Natural killer cell (primary cell): ENCODE measurements at regions of chr16 and their contacts with region 1.

Region 1: GRCh38 chr16:87765776-87766484 is at the start of gene KLHDC4:
- DNase-seq: peak; percentile 91 to 94
- ATAC-seq: peak; percentile 41 to 60 (median 41)
- H3K4me3 ChIP-seq: peak within 1 kb of the TSS; percentile 87
- H3K4me3 Mint-ChIP-seq: peak within 1 kb of the TSS; percentile 100
- H3K27ac ChIP-seq: peak within 1 kb of the TSS; percentile 96
- H3K27ac Mint-ChIP-seq: peak within 1 kb of the TSS; percentile 95 to 100
- H3K4me1 ChIP-seq: peaks cover 51% of the 10 kb centered on the region
- H3K4me1 Mint-ChIP-seq: peaks cover 53 to 58% of the 10 kb centered on the region in 2 donors
- H3K27me3 ChIP-seq: no peaks in the 10 kb centered on the region
- H3K27me3 Mint-ChIP-seq: no peaks in the 10 kb centered on the region
- CTCF ChIP-seq: no peak
- total RNA-seq, gene KLHDC4: 210 to 311 (median 210) TPM

Region 2: GRCh38 chr16:87492721-87493607 is 273.0 kb before region 1 on chr16 and contains the start of gene ZCCHC14:
- intact Hi-C with region 1: loop called (anchors 10 kb)
- DNase-seq: peak; percentile 99
- ATAC-seq: peak; percentile 92 to 99 (median 94)
- H3K4me3 ChIP-seq: peak within 1 kb of the TSS; percentile 65
- H3K4me3 Mint-ChIP-seq: peak within 1 kb of the TSS; percentile 90
- H3K27ac ChIP-seq: no peak within 1 kb of the TSS
- H3K27ac Mint-ChIP-seq: peak within 1 kb of the TSS; percentile 82 to 87
- H3K4me1 ChIP-seq: peaks cover 62% of the 10 kb centered on the region
- H3K4me1 Mint-ChIP-seq: peaks cover 45 to 73% of the 10 kb centered on the region in 2 donors
- H3K27me3 ChIP-seq: no peaks in the 10 kb centered on the region
- H3K27me3 Mint-ChIP-seq: no peaks in the 10 kb centered on the region
- CTCF ChIP-seq: no peak
- total RNA-seq, gene ZCCHC14: 12.2 to 20.9 (median 19.2) TPM

Region 3: DNA sequence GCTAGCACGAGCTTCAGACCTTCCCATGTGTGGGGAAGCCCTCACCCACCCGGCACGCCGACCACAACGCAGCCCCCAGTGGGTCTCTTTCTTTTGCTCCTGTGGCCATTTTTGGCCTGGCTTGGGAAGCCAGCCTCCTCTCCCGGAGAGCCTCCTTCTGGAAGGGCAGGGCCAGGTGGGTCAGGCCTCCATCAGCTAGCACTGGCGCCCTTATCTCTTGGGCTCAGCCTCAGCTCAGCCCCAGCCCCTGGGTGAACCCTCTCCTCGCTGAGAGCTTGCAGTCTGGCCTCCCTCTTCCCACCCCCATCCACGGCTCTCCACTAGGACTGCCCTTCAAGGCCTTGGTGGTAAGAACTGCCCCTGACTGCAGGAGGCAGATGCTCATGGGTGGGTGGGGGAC is 178.3 kb before region 1 on chr16:
- intact Hi-C with region 1: loop called (anchors 1 kb)
- DNase-seq: no peak
- ATAC-seq: no peak
- H3K4me3 ChIP-seq: no peak overlapping the region
- H3K4me3 Mint-ChIP-seq: no peak overlapping the region
- H3K27ac ChIP-seq: no peak overlapping the region
- H3K27ac Mint-ChIP-seq: no peak overlapping the region
- H3K4me1 ChIP-seq: no peaks in the 10 kb centered on the region
- H3K4me1 Mint-ChIP-seq: no peaks in the 10 kb centered on the region
- H3K27me3 ChIP-seq: peaks cover 2% of the 10 kb centered on the region
- H3K27me3 Mint-ChIP-seq: peaks cover 27 to 49% of the 10 kb centered on the region in 2 donors
- CTCF ChIP-seq: no peak

Region 4: DNA sequence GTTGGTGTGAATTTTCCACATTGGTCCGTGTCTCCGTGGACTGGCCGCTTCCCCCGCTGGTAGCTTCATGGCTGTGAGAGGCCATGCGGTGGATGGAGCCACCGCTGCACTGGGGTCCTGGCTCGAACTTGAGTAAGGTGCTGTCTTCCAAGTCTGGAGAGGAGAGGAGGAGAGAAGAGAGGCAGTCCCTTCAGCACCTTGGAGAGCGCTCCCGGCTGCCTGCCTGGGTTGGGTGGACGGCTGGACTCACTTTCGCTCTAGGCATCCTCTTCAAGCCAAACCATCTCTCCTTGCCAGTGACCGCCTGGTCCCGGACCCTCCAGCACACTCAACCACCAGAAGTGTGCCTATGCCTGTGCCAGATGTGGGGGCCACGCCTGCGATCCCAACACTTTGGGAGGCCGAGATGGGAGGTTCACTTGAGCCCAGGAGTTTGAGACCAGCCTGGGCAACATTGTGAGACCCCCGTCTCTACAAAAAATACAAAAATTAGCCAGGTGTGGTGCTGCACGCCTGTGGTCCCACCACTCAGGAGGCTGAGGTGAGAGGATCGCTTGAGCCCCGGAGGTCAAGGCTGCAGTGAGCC is 157.4 kb before region 1 on chr16:
- intact Hi-C with region 1: no loop called
- DNase-seq: peak; percentile 44 to 55
- ATAC-seq: peak; percentile 40 to 63 (median 48)
- H3K4me3 ChIP-seq: no peak overlapping the region
- H3K4me3 Mint-ChIP-seq: no peak overlapping the region
- H3K27ac ChIP-seq: no peak overlapping the region
- H3K27ac Mint-ChIP-seq: no peak overlapping the region
- H3K4me1 ChIP-seq: no peaks in the 10 kb centered on the region
- H3K4me1 Mint-ChIP-seq: no peaks in the 10 kb centered on the region
- H3K27me3 ChIP-seq: peaks cover 17% of the 10 kb centered on the region
- H3K27me3 Mint-ChIP-seq: peaks cover 26 to 39% of the 10 kb centered on the region in 2 donors
- CTCF ChIP-seq: no peak

Region 5: DNA sequence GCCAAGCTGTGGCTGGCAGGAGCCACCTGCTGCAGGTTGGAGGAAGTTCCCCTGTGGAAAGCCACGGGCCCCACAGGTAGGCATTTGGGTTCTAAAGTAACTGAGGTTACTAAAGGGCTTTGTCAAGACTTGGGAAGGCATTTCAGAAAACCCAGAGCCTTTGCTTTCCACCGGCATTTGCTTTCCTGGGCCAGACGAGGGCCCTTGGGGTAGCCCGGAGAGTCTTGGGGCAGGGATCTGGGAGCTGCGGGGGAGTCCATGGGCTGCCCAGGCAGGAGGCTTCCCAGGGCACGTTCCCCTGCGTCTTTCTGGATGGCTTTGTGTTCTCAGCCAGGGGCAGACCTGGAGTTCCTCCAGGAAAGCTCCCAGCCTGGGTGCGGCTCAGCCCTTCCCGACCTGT is 120.1 kb before region 1 on chr16:
- intact Hi-C with region 1: no loop called
- DNase-seq: no peak
- ATAC-seq: no peak
- H3K4me3 ChIP-seq: no peak overlapping the region
- H3K4me3 Mint-ChIP-seq: no peak overlapping the region
- H3K27ac ChIP-seq: no peak overlapping the region
- H3K27ac Mint-ChIP-seq: no peak overlapping the region
- H3K4me1 ChIP-seq: no peaks in the 10 kb centered on the region
- H3K4me1 Mint-ChIP-seq: peaks cover 0 to 10% of the 10 kb centered on the region in 2 donors
- H3K27me3 ChIP-seq: no peaks in the 10 kb centered on the region
- H3K27me3 Mint-ChIP-seq: peaks cover 8 to 12% of the 10 kb centered on the region in 2 donors
- CTCF ChIP-seq: no peak

Region 6: GRCh38 chr16:87702325-87702811 is 63.6 kb before region 1 on chr16:
- intact Hi-C with region 1: loop called (anchors 2 kb)
- DNase-seq: peak; percentile 40 to 57
- ATAC-seq: peak; percentile 78 to 82 (median 79)
- H3K4me3 ChIP-seq: no peak overlapping the region
- H3K4me3 Mint-ChIP-seq: peak overlapping the region; percentile 80
- H3K27ac ChIP-seq: peak overlapping the region; percentile 48
- H3K27ac Mint-ChIP-seq: peak overlapping the region; percentile 78 to 88
- H3K4me1 ChIP-seq: peaks cover 53% of the 10 kb centered on the region
- H3K4me1 Mint-ChIP-seq: peaks cover 42 to 47% of the 10 kb centered on the region in 2 donors
- H3K27me3 ChIP-seq: no peaks in the 10 kb centered on the region
- H3K27me3 Mint-ChIP-seq: no peaks in the 10 kb centered on the region
- CTCF ChIP-seq: peak; percentile 41

Region 7: GRCh38 chr16:87725596-87726235 is 40.2 kb before region 1 on chr16:
- intact Hi-C with region 1: loop called (anchors 1 kb)
- DNase-seq: peak; percentile 24 to 25
- ATAC-seq: peak; percentile 10 to 30 (median 21)
- H3K4me3 ChIP-seq: no peak overlapping the region
- H3K4me3 Mint-ChIP-seq: peak overlapping the region; percentile 77
- H3K27ac ChIP-seq: peak overlapping the region; percentile 97
- H3K27ac Mint-ChIP-seq: peak overlapping the region; percentile 97 to 99
- H3K4me1 ChIP-seq: peaks cover 46% of the 10 kb centered on the region
- H3K4me1 Mint-ChIP-seq: peaks cover 57 to 58% of the 10 kb centered on the region in 2 donors
- H3K27me3 ChIP-seq: no peaks in the 10 kb centered on the region
- H3K27me3 Mint-ChIP-seq: no peaks in the 10 kb centered on the region
- CTCF ChIP-seq: no peak

Region 8: GRCh38 chr16:87950765-87951549 is 185.0 kb after region 1 on chr16 and contains the start of gene BANP:
- intact Hi-C with region 1: loop called (anchors 5 kb)
- DNase-seq: peak; percentile 95 to 99
- ATAC-seq: peak; percentile 86 to 96 (median 87)
- H3K4me3 ChIP-seq: peak within 1 kb of the TSS; percentile 91
- H3K4me3 Mint-ChIP-seq: peak within 1 kb of the TSS; percentile 96
- H3K27ac ChIP-seq: peak within 1 kb of the TSS; percentile 95
- H3K27ac Mint-ChIP-seq: peak within 1 kb of the TSS; percentile 97 to 98
- H3K4me1 ChIP-seq: peaks cover 44% of the 10 kb centered on the region
- H3K4me1 Mint-ChIP-seq: peaks cover 42 to 43% of the 10 kb centered on the region in 2 donors
- H3K27me3 ChIP-seq: no peaks in the 10 kb centered on the region
- H3K27me3 Mint-ChIP-seq: peaks cover 7 to 8% of the 10 kb centered on the region in 2 donors
- CTCF ChIP-seq: no peak
- total RNA-seq, gene BANP: 88.8 to 117 (median 117) TPM